HepG2 (cell line): ENCODE measurements at regions of chr3 and their contacts with region 1.

Region 1: GRCh38 chr3:186806089-186807055 is at the start of gene RFC4:
- DNase-seq: peak; percentile 72
- ATAC-seq: peak; percentile 95
- H3K4me3 ChIP-seq: peak within 1 kb of the TSS; percentile 72 to 90 (median 73)
- H3K27ac ChIP-seq: peak within 1 kb of the TSS; percentile 82
- H3K4me1 ChIP-seq: peaks cover 28% of the 10 kb centered on the region
- H3K27me3 ChIP-seq: peaks cover 1 to 3% of the 10 kb centered on the region in 2 experiments; a peak in 2 of 5 replicates
- CTCF ChIP-seq: peak; percentile 28; the same call in 1 of the 2 replicates
- EP300 ChIP-seq: no peak
- POLR2A ChIP-seq: peak; percentile 83 to 91
- RAD21 ChIP-seq: peak; percentile 25; the same call in 1 of the 2 replicates
- total RNA-seq, gene RFC4: 103 and 109 TPM in 2 replicates

Region 2: GRCh38 chr3:186259612-186260383 is 546.6 kb before region 1 on chr3:
- CTCF ChIA-PET with region 1: no interaction called
- POLR2A ChIA-PET with region 1: no interaction called
- in situ Hi-C with region 1: loop called (anchors 25 kb)
- intact Hi-C with region 1: no loop called
- DNase-seq: peak; percentile 57
- ATAC-seq: peak; percentile 100
- H3K4me3 ChIP-seq: peak overlapping the region in 1 of 3 experiments; percentile 14; a peak in 1 of 6 replicates
- H3K27ac ChIP-seq: no peak overlapping the region
- H3K4me1 ChIP-seq: peaks cover 6% of the 10 kb centered on the region; the same call in 1 of the 2 replicates
- H3K27me3 ChIP-seq: peaks cover 0 to 1% of the 10 kb centered on the region in 2 experiments; a peak in 1 of 5 replicates
- CTCF ChIP-seq: peak; percentile 94
- EP300 ChIP-seq: no peak
- POLR2A ChIP-seq: no peak
- RAD21 ChIP-seq: peak; percentile 93

Region 3: DNA sequence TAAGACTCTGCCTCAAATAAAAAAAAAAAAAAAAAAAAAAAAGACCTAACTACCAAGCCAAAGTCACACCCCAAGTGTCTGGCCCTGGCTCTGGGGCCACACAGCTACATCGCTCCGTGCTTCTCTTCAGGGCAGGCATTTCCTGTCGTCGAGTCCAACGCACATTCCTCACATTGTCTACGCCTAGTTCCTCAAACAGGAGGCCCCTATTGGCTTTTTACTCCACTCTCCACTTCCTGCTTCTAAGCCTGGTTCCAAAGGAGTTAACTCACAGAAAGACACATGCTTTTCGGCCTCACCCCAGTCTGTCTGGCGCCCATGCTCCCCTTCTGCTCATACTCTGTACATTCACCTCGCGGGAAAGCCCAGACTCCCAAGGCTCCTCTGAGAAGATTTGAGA is 60.4 kb before region 1 on chr3:
- CTCF ChIA-PET with region 1: no interaction called
- POLR2A ChIA-PET with region 1: no interaction called
- in situ Hi-C with region 1: no loop called
- intact Hi-C with region 1: no loop called
- DNase-seq: peak; percentile 94
- ATAC-seq: peak; percentile 93
- H3K4me3 ChIP-seq: no peak overlapping the region
- H3K27ac ChIP-seq: peak overlapping the region; percentile 71
- H3K4me1 ChIP-seq: peaks cover 58% of the 10 kb centered on the region
- H3K27me3 ChIP-seq: no peaks in the 10 kb centered on the region
- CTCF ChIP-seq: no peak
- EP300 ChIP-seq: no peak; a peak in 1 of 4 replicates
- POLR2A ChIP-seq: peak; percentile 44 to 65; a peak in 3 of 4 replicates
- RAD21 ChIP-seq: no peak